MCF 10A (cell line): ENCODE measurements at regions of chr17 and their contacts with region 1.

Region 1: DNA sequence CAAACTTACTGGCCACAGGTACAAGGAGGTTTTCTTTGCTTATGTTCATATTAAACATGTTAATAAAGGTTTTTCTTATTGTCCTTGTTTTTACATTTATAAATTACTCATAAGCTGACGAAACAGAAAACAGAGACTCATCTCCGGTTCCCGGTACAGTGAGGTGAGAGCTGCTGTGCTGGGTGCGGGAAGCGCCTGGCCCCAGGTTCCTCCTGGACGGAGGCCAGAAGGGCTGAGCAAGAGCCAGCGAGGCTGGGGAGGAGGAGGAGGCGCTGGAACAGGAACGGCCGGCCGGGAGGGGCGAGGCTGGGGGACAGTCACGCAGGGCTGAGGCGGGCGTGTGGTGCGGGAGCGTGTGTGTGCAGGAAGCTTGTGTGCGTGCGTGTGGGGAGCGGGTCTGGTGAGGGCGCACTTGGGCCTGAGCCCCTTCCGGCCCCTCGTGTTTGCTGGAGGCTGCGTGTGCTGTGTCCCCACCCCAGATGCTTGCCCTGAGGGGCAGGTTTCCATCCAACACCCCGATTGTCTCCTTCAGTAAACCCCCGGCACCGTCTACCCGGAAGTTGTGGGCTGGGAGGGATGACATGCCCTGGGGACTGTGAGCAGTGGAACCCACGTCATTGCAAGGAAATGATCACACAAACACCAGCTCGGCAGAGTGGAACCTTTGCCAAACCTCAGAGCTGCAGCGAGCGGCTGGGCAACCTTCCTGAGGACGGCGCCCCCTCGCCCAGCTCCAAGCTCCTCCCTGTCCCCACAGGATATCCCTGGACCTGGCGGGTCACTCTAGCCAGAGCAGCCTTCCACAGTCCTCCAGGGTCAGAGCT is 19.5 kb downstream of the CD7 start:
- DNase-seq: peak; percentile 98
- H3K4me3 Mint-ChIP-seq: peak overlapping the region; percentile 92
- H3K27ac Mint-ChIP-seq: peak overlapping the region; percentile 98
- H3K4me1 Mint-ChIP-seq: peaks cover 56% of the 10 kb centered on the region
- H3K27me3 Mint-ChIP-seq: no peaks in the 10 kb centered on the region
- CTCF ChIP-seq: no peak

Region 2: DNA sequence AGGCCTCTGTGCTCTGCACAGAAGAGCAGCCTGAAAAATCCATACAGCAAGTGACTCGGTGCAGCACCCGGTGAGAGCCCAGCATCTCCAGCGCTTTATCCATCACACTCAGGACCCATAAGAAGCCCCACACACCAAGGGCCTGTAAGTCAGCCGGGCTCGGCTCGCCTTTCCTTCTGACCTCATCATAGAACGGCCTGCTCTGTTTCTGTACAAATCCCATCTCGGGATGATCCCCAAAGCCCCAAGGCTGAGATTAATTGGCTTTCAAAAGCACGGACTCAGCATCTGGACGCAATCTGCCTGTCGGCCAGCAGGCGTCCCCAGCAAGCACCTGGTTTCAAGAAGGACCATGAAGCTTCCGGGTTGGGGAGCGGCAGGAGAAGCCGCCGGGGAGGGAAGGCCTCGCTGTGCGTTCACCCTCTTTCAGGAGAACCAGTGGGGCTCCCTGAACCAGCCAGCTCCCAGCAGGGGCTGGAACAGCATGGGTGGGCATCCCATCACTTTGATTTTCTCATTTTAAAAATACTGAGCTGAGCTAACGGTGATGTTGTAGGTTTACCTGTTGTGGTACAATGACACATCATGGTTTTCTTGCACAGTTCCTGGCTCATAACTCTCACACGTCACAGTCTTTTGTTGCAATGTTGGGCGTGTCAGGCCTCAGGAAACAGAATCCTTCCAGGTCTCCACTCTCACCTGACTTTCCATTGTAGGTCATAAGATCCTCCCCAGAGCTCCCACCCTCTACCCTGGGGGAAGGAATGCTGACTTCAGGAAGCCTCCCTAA is 92.0 kb before region 1 on chr17:
- CTCF ChIA-PET with region 1: interaction called, 3 read pairs
- POLR2A ChIA-PET with region 1: interaction called, 28 read pairs
- intact Hi-C with region 1: no loop called
- DNase-seq: peak; percentile 96
- H3K4me3 Mint-ChIP-seq: peak overlapping the region; percentile 64
- H3K27ac Mint-ChIP-seq: peak overlapping the region; percentile 97
- H3K4me1 Mint-ChIP-seq: peaks cover 27% of the 10 kb centered on the region
- H3K27me3 Mint-ChIP-seq: no peaks in the 10 kb centered on the region
- CTCF ChIP-seq: peak; percentile 80

Region 3: GRCh38 chr17:82236142-82236981 is 61.6 kb before region 1 on chr17:
- CTCF ChIA-PET with region 1: interaction called, 6 read pairs
- POLR2A ChIA-PET with region 1: interaction called, 49 read pairs
- intact Hi-C with region 1: no loop called
- DNase-seq: peak; percentile 74
- H3K4me3 Mint-ChIP-seq: peak overlapping the region; percentile 16
- H3K27ac Mint-ChIP-seq: peak overlapping the region; percentile 39
- H3K4me1 Mint-ChIP-seq: peaks cover 22% of the 10 kb centered on the region
- H3K27me3 Mint-ChIP-seq: no peaks in the 10 kb centered on the region
- CTCF ChIP-seq: peak; percentile 94

Region 4: GRCh38 chr17:82267575-82268379 is 30.1 kb before region 1 on chr17:
- CTCF ChIA-PET with region 1: no interaction called
- POLR2A ChIA-PET with region 1: interaction called, 38 read pairs
- intact Hi-C with region 1: no loop called
- DNase-seq: peak; percentile 92
- H3K4me3 Mint-ChIP-seq: peak overlapping the region; percentile 64
- H3K27ac Mint-ChIP-seq: peak overlapping the region; percentile 42
- H3K4me1 Mint-ChIP-seq: peaks cover 39% of the 10 kb centered on the region
- H3K27me3 Mint-ChIP-seq: no peaks in the 10 kb centered on the region
- CTCF ChIP-seq: no peak

Region 5: DNA sequence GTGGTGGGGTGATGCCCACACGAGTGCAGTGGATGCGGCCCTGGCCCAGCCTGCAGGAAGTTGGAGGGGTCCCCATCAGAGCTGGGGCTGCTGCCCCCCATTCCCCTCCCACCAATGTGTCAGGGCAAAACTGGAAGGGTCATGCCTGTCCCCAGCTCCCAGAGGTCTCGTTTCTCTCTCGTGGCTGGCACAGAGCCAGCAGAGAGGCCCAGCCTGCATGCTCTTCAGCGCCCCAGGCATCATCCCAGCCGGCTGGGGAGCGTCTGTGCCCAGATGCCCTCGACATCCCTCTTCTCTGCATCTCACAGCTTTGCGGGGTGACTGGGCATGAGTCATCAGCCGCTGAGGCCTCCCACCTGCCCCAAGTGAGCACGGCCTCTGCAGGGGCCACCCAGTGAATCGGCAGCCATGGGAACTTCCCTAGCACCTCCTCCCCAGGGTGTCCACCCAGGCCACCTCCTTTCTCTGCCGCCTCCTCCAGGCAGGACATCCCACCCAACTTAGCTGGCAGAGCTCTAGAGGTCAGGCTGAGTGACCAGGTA is 14.6 kb before region 1 on chr17:
- CTCF ChIA-PET with region 1: interaction called, 3 read pairs
- POLR2A ChIA-PET with region 1: interaction called, 50 read pairs
- intact Hi-C with region 1: no loop called
- DNase-seq: peak; percentile 92
- H3K4me3 Mint-ChIP-seq: no peak overlapping the region
- H3K27ac Mint-ChIP-seq: peak overlapping the region; percentile 39
- H3K4me1 Mint-ChIP-seq: peaks cover 38% of the 10 kb centered on the region
- H3K27me3 Mint-ChIP-seq: no peaks in the 10 kb centered on the region
- CTCF ChIP-seq: no peak

Region 6: DNA sequence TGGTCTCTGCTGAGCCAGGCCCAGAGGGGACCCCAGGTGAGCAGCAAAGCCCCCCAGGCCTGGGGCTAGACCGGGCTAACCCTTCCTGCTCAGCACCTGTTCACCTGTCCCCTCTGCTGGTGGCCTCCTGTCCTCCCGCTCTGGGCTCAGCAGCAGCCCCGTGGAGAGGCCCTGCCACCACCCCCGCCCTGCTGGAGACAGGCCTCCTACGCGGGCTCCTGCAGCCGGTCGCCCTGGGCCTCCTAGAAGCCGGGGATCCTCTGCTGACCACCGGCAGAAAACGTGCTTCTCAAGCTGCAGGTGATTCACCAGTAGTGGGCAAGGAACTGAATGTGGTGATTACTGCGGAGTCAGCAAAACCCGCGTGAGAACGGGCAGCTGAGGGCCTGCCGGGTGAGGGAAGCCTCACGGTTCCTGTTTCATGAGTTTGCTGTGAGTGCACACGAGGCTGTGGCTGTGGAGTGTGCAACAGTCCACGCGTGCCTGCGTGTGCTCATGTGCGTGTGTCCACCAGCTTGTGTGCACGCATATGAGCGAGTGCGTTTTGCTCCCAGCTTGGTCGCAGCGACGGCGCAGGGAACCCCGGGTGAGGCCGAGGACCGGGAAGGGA is 34.8 kb after region 1 on chr17:
- CTCF ChIA-PET with region 1: interaction called, 6 read pairs
- POLR2A ChIA-PET with region 1: interaction called, 88 read pairs
- intact Hi-C with region 1: no loop called
- DNase-seq: peak; percentile 68
- H3K4me3 Mint-ChIP-seq: peak overlapping the region; percentile 85
- H3K27ac Mint-ChIP-seq: peak overlapping the region; percentile 85
- H3K4me1 Mint-ChIP-seq: peaks cover 16% of the 10 kb centered on the region
- H3K27me3 Mint-ChIP-seq: no peaks in the 10 kb centered on the region
- CTCF ChIP-seq: no peak

Region 7: DNA sequence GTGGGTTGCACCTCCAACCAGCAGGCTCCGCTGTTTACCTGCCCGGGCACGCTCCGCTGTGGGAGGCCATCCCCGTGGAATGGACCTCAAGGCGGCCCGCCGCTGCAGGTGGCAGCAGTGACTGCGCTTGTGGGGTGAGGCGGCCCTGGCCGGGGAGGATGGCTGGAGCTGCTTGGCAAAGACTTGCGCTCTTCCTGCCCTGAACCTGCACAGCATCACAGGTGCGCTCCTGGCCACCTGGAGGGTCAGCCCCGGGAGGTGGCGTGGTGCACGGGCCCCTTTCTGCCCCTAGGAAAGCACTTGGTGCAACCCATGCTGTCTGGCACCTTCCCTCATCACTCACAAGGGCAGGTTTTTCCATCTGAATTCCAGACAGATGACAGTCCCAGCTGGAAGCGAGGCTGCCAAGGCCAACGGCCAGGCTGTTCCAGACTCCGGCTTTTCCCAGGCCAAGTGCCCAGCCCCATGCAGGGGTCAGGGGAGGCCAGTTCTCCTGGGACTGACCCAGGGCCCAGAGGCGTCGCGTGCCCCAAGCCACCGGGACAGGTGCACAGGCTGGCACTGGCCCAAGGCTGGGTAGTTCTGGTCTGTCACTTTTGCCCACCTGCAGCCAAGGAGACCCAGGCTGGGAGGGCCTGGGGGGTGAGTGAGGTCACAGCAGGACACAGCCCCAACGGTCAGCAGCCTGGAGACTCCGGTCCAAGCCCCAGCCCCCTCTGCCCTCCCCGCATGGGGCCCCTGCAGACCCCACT is 87.0 kb after region 1 on chr17:
- CTCF ChIA-PET with region 1: no interaction called
- POLR2A ChIA-PET with region 1: no interaction called
- intact Hi-C with region 1: no loop called
- DNase-seq: peak; percentile 73
- H3K4me3 Mint-ChIP-seq: no peak overlapping the region
- H3K27ac Mint-ChIP-seq: no peak overlapping the region
- H3K4me1 Mint-ChIP-seq: peaks cover 15% of the 10 kb centered on the region
- H3K27me3 Mint-ChIP-seq: peaks cover 30% of the 10 kb centered on the region
- CTCF ChIP-seq: peak; percentile 28